ENCODE measurements at regions of chr14 and their contacts with region 1.

Region 1: DNA sequence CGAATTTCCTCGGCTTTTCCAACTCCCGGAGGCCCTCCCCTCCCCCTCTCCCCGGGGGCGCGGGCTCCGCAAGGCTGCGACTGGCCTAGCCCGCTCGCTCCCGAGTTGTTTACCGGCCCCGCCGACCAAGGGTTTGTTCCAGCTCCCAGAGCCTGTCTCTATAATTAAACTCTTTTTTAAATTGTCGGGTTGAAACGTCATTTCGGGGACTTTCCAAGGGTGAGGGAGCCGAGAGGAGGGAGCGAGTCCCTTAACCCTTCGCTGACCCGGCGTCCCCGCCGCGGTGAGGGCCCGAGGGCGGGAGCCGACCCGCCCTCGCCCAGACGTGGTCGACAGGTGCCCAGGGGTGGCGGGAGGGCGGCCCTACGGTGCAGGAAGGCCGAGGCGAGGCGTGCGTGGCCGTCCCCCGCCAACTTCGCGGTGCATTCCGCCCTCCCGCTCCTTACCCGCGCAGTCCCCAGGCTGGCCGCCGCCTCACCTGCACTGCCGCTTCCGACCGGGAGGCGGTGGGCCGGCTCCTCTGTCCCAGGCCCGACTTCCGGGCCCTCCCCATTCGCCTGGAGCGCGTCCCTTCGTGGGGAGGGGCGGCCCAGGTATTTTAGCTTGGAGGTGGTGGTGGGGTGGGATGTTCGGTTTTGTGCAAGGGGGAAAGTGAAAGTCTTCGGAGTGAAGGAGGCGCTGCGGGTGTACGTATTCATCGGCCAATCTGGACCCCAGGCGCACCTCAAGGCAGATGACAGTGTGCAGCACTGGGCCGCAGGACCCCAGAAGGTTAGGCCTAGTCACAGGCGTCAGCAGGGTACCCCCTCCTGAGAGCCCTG is 2.9 kb upstream of the ZFP36L1 start:
- DNase-seq: peak; percentile 85
- H3K4me3 Mint-ChIP-seq: peak overlapping the region; percentile 90
- H3K27ac Mint-ChIP-seq: peak overlapping the region; percentile 100
- H3K4me1 Mint-ChIP-seq: peaks cover 44% of the 10 kb centered on the region
- H3K27me3 Mint-ChIP-seq: no peaks in the 10 kb centered on the region

Region 2: DNA sequence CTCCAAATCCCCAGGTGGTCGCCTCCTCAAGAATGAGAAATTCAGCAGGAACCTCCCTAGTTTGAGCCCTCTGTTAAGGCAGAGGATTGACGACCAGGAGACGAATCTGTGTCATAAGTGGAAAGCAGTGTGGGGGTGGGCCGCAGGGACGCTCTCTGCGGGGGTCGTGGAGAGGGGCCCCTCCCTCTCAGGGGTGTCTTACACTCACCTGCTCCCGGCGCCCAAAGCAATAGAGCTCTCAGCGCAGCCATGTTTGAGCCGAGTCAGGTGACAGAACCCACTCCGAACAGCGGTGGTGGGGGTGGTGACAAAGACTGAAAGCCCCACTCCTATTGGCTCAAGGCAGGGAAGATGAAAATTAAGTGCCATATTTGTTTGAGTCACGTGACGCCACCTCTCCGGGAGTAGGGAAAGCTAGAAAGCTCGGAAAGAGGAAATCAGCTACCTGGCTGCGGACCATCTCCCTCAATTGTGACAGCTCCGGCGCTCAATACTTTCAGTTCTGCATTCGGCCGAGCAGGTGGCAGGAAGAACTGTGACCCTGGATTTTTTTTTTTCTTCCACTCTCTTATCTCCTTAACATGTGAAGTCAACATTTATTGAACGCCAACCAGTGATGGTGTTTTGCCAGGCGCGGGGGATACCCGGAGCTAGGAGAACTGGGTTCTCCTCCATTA is 979.3 kb before region 1 on chr14 and contains the start of gene ZFYVE26:
- CTCF ChIA-PET with region 1: no interaction called
- intact Hi-C with region 1: loop called (anchors 5 kb)
- DNase-seq: peak; percentile 96
- H3K4me3 Mint-ChIP-seq: peak within 1 kb of the TSS; percentile 95
- H3K27ac Mint-ChIP-seq: peak within 1 kb of the TSS; percentile 91
- H3K4me1 Mint-ChIP-seq: peaks cover 46% of the 10 kb centered on the region
- H3K27me3 Mint-ChIP-seq: no peaks in the 10 kb centered on the region
- total RNA-seq, gene ZFYVE26: 11.7 to 12.1 TPM

Region 3: GRCh38 chr14:68283378-68284123 is 512.3 kb before region 1 on chr14:
- CTCF ChIA-PET with region 1: interaction called, 3 read pairs
- intact Hi-C with region 1: loop called (anchors 2 kb)
- DNase-seq: peak; percentile 67
- H3K4me3 Mint-ChIP-seq: peak overlapping the region; percentile 27
- H3K27ac Mint-ChIP-seq: no peak overlapping the region
- H3K4me1 Mint-ChIP-seq: peaks cover 85% of the 10 kb centered on the region
- H3K27me3 Mint-ChIP-seq: no peaks in the 10 kb centered on the region

Region 4: DNA sequence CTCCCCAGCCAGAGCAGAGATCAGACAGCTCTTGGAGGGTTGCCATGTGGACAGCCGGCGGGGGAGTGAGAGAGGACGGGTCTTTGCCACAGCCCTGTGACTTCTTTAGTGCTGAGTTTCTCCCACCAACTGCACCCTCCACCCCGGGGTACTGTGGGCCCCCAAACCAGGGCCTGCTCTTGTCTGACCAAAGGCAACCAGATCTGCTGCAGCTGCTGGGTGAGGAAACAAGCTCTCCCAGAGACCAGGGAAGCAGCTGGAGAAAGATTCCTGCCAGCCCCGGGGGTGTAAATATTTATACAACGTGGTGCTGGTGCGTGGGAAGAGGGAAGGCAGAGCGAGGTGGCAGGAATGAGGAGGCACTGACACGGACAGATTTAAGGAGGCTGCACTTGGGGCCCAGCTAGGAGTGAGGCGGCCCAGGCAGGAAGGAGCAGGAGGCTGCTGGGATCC is 11.4 kb after region 1 on chr14:
- CTCF ChIA-PET with region 1: interaction called, 270 read pairs
- intact Hi-C with region 1: no loop called
- DNase-seq: no peak
- H3K4me3 Mint-ChIP-seq: no peak overlapping the region
- H3K27ac Mint-ChIP-seq: no peak overlapping the region
- H3K4me1 Mint-ChIP-seq: peaks cover 41% of the 10 kb centered on the region
- H3K27me3 Mint-ChIP-seq: no peaks in the 10 kb centered on the region

Region 5: GRCh38 chr14:68979021-68979782 is 183.4 kb after region 1 on chr14 and contains the start of gene ACTN1:
- CTCF ChIA-PET with region 1: no interaction called
- intact Hi-C with region 1: loop called (anchors 5 kb)
- DNase-seq: peak; percentile 89
- H3K4me3 Mint-ChIP-seq: peak within 1 kb of the TSS; percentile 85
- H3K27ac Mint-ChIP-seq: peak within 1 kb of the TSS; percentile 87
- H3K4me1 Mint-ChIP-seq: peaks cover 32% of the 10 kb centered on the region
- H3K27me3 Mint-ChIP-seq: no peaks in the 10 kb centered on the region
- total RNA-seq, gene ACTN1: 79.7 to 80.6 TPM

Region 6: GRCh38 chr14:69117020-69117767 is 321.4 kb after region 1 on chr14:
- CTCF ChIA-PET with region 1: no interaction called
- intact Hi-C with region 1: no loop called
- DNase-seq: peak; percentile 33
- H3K4me3 Mint-ChIP-seq: no peak overlapping the region
- H3K27ac Mint-ChIP-seq: peak overlapping the region; percentile 57
- H3K4me1 Mint-ChIP-seq: peaks cover 37% of the 10 kb centered on the region
- H3K27me3 Mint-ChIP-seq: no peaks in the 10 kb centered on the region

Region 7: GRCh38 chr14:70655110-70655826 is 1859.5 kb after region 1 on chr14:
- CTCF ChIA-PET with region 1: no interaction called
- intact Hi-C with region 1: loop called (anchors 10 kb)
- DNase-seq: peak; percentile 92
- H3K4me3 Mint-ChIP-seq: peak overlapping the region; percentile 83
- H3K27ac Mint-ChIP-seq: peak overlapping the region; percentile 98
- H3K4me1 Mint-ChIP-seq: peaks cover 81% of the 10 kb centered on the region
- H3K27me3 Mint-ChIP-seq: no peaks in the 10 kb centered on the region

Measured in activated naive CD4-positive, alpha-beta T cell treated with anti-CD3 and anti-CD28 coated beads for 36 hours (primary cell).